A673 (cell line): ENCODE measurements at regions of chr19 and their contacts with region 1.

Region 1: GRCh38 chr19:33771384-33772101 is 25.1 kb upstream of the KCTD15 start:
- DNase-seq: peak; percentile 77
- H3K4me3 ChIP-seq: no peak overlapping the region
- H3K27ac ChIP-seq: no peak overlapping the region
- H3K4me1 ChIP-seq: no peaks in the 10 kb centered on the region
- H3K27me3 ChIP-seq: no peaks in the 10 kb centered on the region
- CTCF ChIP-seq: peak; percentile 87

Region 2: GRCh38 chr19:33241530-33242101 is 529.9 kb before region 1 on chr19:
- CTCF ChIA-PET with region 1: no interaction called
- POLR2A ChIA-PET with region 1: no interaction called
- intact Hi-C with region 1: loop called (anchors 5 kb)
- DNase-seq: no peak
- H3K4me3 ChIP-seq: no peak overlapping the region
- H3K27ac ChIP-seq: no peak overlapping the region
- H3K4me1 ChIP-seq: no peaks in the 10 kb centered on the region
- H3K27me3 ChIP-seq: no peaks in the 10 kb centered on the region
- CTCF ChIP-seq: peak; percentile 76

Region 3: DNA sequence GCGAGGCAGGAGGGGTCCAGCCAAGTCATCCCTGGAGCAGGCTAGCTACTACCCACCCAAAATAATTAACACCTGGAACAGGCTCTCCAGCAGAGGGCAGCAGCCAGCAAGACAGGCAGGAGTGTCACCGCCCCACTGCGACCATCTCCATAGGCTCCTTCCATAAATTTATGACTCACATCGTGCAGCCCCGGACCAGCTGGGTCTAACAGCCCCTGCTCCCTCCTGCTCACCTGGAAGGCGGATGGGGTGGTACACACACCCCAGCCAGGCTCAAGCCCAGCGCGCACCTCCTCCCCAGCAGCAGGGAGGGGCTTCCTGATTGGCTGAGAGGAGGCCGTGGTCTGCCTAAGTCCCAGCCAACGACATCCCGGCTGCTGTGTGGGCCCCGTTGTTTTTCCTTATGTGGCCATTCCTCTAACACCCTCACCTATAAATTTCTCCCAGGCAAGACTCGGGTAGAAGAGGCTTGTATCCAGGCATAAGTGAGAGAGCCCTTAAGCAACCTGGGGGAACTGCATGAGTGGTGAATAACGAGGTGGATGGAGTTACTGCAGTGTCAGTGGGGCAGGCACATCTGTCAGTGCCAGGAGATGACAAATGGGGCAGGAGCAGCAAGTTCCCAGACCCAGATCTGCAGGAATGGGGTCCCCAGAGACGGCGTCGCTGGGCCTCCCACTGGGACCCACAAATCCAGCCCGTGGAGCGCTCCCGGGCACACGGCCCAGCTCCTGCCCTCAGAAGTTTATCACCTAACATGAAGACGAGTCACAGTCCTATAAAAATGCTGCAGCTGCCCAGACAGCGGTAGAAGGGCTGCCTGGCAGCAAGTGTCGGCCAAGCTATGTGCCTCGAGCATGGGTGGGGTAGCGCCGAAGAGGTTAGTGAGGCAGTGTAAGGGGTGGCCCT is 355.0 kb before region 1 on chr19:
- CTCF ChIA-PET with region 1: interaction called, 12 read pairs
- POLR2A ChIA-PET with region 1: no interaction called
- intact Hi-C with region 1: loop called (anchors 1 kb)
- DNase-seq: peak; percentile 80
- H3K4me3 ChIP-seq: no peak overlapping the region
- H3K27ac ChIP-seq: no peak overlapping the region
- H3K4me1 ChIP-seq: no peaks in the 10 kb centered on the region
- H3K27me3 ChIP-seq: no peaks in the 10 kb centered on the region
- CTCF ChIP-seq: peak; percentile 84

Region 4: GRCh38 chr19:33430674-33431277 is 340.8 kb before region 1 on chr19:
- CTCF ChIA-PET with region 1: interaction called, 12 read pairs
- POLR2A ChIA-PET with region 1: no interaction called
- intact Hi-C with region 1: loop called (anchors 1 kb)
- DNase-seq: peak; percentile 81
- H3K4me3 ChIP-seq: no peak overlapping the region
- H3K27ac ChIP-seq: no peak overlapping the region
- H3K4me1 ChIP-seq: peaks cover 16% of the 10 kb centered on the region
- H3K27me3 ChIP-seq: no peaks in the 10 kb centered on the region
- CTCF ChIP-seq: peak; percentile 94

Region 5: GRCh38 chr19:33603377-33603776 is 168.2 kb before region 1 on chr19:
- CTCF ChIA-PET with region 1: no interaction called
- POLR2A ChIA-PET with region 1: no interaction called
- intact Hi-C with region 1: no loop called
- DNase-seq: no peak
- H3K4me3 ChIP-seq: no peak overlapping the region
- H3K27ac ChIP-seq: no peak overlapping the region
- H3K4me1 ChIP-seq: no peaks in the 10 kb centered on the region
- H3K27me3 ChIP-seq: peaks cover 9% of the 10 kb centered on the region
- CTCF ChIP-seq: no peak